ENCODE measurements at regions of chr21 and their contacts with region 1.

Region 1: GRCh38 chr21:31786164-31786920 is 54.4 kb upstream of the SCAF4 start:
- DNase-seq: no peak

Region 2: DNA sequence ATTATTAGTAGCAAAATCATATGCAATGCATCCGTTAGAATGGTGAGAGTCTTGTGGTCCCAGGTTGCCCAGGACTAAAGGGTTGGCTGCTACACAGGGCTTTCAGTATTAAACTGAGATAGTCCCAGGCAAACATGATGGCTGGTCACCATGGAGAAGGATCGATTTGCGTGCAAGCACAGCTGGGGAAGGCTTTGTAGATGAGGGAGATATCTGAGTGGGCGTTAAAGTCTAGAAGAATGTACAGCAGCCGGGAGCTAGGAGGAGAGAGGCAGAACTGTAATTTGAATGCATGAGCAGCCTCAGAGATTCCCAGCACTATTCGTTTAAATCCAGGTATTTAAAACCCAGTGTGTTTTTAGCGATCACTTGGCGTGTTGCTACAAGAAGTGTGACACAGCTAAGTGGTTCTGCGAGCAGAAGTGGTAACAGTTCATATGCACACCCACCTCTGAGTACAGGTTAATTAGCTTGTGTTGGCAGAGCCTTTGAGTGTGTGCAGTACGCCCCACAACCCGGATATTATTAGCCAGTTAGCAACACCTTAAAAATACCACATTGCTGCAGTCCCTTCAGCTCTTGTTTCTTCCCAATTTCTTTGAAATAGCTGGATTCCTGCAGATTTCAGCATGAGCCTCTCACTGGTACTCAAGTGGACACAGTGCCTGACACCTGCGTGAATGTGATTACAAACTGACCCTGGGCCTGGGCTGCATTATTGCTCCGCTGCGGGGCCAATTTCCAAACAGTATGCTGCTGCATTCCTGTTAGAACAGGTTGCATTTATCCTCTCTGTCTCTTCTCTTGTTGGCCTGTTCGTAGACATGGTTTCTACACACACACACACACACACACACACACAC is 12.7 kb after region 1 on chr21:
- CTCF ChIA-PET with region 1: interaction called, 13 read pairs
- POLR2A ChIA-PET with region 1: no interaction called
- DNase-seq: no peak

Region 3: GRCh38 chr21:31991356-31992331 is 205.3 kb after region 1 on chr21:
- CTCF ChIA-PET with region 1: no interaction called
- POLR2A ChIA-PET with region 1: no interaction called
- DNase-seq: no peak

Region 4: DNA sequence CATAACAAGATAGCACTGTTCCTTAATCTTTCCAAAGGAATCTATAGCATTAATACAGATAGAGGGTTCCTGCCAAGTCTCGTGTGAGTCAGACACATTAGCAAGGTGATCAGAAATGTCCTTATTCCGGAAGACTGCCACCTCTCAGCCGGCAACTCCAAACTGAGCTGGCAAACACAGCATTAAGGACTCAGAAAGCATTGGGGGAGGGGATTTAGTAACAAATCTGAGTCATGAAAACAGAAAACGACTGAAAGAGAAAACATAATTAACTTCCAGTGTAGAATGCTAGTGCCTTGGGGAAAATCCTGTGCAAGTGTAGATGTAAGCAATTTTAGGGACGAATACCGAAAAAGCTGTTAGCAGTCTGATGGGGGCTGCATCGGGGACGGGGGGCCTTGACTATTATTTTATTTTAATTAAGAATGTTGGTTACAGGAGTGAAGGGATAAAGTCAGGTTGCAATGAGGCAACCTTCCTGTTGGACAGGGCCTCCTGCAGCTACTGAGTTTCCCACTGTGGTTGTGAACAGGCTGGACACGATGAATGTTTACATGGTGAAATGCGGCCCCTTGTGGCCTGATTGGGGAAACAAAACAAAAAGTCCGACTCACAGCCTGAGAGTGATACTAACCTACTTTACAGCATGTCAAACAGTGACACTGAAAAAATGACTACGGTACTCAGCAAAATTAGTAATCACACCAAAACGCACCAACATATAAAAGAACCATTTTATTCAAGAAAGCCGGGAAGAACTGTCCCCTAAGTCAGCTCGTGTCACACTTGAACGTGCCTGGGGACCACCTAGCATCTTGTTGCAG is 471.8 kb after region 1 on chr21:
- CTCF ChIA-PET with region 1: interaction called, 10 read pairs
- POLR2A ChIA-PET with region 1: interaction called, 3 read pairs
- DNase-seq: peak; percentile 84

Measured in HEK293T (cell line).